Ovary (tissue), 10 donors: ENCODE measurements at regions of chr7 and their contacts with region 1.

Region 1: GRCh38 chr7:33109005-33109757 is at the start of gene RP9:
- DNase-seq: peak; percentile 57 to 83 (median 70)
- H3K4me3 ChIP-seq: peak within 1 kb of the TSS; percentile 70
- H3K27ac ChIP-seq: peak within 1 kb of the TSS; percentile 18 to 34
- H3K4me1 ChIP-seq: peaks cover 4% of the 10 kb centered on the region
- H3K27me3 ChIP-seq: no peaks in the 10 kb centered on the region
- CTCF ChIP-seq: peak in 2 of 3 donors; percentile 53 to 77
- EP300 ChIP-seq: no peak
- POLR2A ChIP-seq: no peak
- total RNA-seq, gene RP9: 6.2 to 16.2 (median 11.3) TPM

Region 2: DNA sequence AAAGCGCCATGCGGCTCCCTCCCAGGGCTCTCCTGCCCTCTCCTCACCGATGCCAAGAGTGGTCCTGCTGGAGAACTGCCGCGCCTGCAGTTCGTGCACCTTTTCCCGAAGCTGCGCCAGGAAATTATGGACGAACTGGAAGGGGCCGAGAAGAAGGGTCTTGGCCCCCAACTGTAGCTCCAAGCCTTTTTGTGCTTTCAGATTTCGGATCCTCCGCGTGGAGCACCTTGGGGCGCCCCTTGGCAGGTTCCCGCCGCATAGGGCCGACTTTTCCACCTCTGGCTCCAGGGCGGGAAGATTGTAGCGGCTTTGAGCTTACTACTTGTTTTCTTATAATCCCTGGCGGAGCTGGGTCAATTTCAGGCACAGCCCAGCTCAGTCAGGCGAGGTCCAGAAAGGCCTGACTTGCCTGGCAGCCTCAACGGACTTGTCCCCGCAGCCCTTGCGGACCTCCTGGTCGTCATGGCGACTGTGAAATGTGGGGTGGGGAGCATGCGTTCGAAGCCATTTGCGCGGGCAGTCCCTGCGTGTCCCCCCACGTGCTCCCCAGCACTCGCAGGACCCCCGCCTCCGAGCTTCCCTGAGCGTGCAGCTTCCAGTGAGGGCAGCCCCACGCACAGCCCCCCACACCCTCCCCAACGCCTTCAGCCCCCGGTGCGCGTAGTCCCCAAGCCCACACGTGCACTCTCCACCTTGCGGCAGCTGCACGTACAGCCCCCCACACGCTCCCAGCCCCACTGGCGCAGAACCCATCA is 347.6 kb before region 1 on chr7:
- intact Hi-C with region 1: loop called in 1 of 4 experiments (anchors 10 kb)
- DNase-seq: no peak
- H3K4me3 ChIP-seq: no peak overlapping the region
- H3K27ac ChIP-seq: no peak overlapping the region
- H3K4me1 ChIP-seq: peaks cover 5% of the 10 kb centered on the region
- H3K27me3 ChIP-seq: no peaks in the 10 kb centered on the region
- CTCF ChIP-seq: no peak
- EP300 ChIP-seq: no peak
- POLR2A ChIP-seq: no peak

Region 3: GRCh38 chr7:33050535-33051318 is 58.5 kb before region 1 on chr7:
- intact Hi-C with region 1: no loop called
- DNase-seq: no peak
- H3K4me3 ChIP-seq: no peak overlapping the region
- H3K27ac ChIP-seq: no peak overlapping the region
- H3K4me1 ChIP-seq: peaks cover 1% of the 10 kb centered on the region
- H3K27me3 ChIP-seq: no peaks in the 10 kb centered on the region
- CTCF ChIP-seq: peak in 2 of 3 donors; percentile 29 to 59
- EP300 ChIP-seq: no peak
- POLR2A ChIP-seq: no peak